Activated CD4-positive, alpha-beta memory T cell treated with anti-CD3 and anti-CD28 coated beads for 36 hours (primary cell): ENCODE measurements at regions of chr14 and their contacts with region 1.

Region 1: GRCh38 chr14:61620130-61620946 is 75.0 kb upstream of the HIF1A start:
- DNase-seq: peak; percentile 79
- H3K4me3 Mint-ChIP-seq: no peak overlapping the region
- H3K27ac Mint-ChIP-seq: peak overlapping the region; percentile 67
- H3K4me1 Mint-ChIP-seq: peaks cover 65% of the 10 kb centered on the region
- H3K27me3 Mint-ChIP-seq: no peaks in the 10 kb centered on the region

Region 2: GRCh38 chr14:61503167-61503801 is 117.1 kb before region 1 on chr14:
- CTCF ChIA-PET with region 1: interaction called, 3 read pairs
- POLR2A ChIA-PET with region 1: no interaction called
- intact Hi-C with region 1: loop called (anchors 1 kb)
- DNase-seq: peak; percentile 90
- H3K4me3 Mint-ChIP-seq: peak overlapping the region; percentile 62
- H3K27ac Mint-ChIP-seq: peak overlapping the region; percentile 98
- H3K4me1 Mint-ChIP-seq: peaks cover 98% of the 10 kb centered on the region
- H3K27me3 Mint-ChIP-seq: no peaks in the 10 kb centered on the region

Region 3: DNA sequence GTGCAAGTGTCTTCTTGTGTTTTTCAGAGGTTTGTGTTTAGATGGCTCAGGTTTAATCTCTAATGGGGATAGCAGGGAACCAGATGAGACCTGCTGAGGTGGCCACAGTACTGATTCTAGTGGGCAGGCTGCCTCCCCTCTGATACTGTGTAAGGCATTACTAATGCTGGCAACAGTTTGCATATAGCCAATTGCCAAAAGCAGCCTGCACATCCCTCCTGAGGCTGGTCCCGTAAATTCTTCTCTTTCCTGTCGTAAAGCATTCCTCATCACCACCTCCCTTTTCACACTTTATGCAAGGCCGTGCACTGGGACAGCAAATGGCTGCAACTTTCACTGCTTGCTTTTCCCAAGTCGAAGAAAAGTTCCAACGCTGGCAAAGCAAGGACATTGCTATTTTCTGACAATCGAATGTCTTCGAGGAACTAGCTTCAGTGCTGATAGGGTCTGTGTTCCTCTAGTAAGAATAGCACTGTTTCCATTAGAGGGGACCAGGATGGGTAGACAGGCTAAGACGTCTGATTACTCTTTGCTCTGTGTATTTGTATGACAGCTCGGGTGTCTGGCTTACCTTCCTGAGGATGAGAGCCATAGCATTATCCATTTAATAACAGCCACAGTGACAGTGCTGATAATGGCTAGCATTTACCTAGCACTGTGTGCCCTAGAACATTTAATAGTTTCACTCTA is 103.2 kb before region 1 on chr14:
- CTCF ChIA-PET with region 1: no interaction called
- POLR2A ChIA-PET with region 1: no interaction called
- intact Hi-C with region 1: no loop called
- DNase-seq: no peak
- H3K4me3 Mint-ChIP-seq: no peak overlapping the region
- H3K27ac Mint-ChIP-seq: peak overlapping the region; percentile 90
- H3K4me1 Mint-ChIP-seq: peaks cover 90% of the 10 kb centered on the region
- H3K27me3 Mint-ChIP-seq: no peaks in the 10 kb centered on the region

Region 4: GRCh38 chr14:61561657-61562276 is 58.6 kb before region 1 on chr14:
- CTCF ChIA-PET with region 1: interaction called, 3 read pairs
- POLR2A ChIA-PET with region 1: interaction called, 7 read pairs
- intact Hi-C with region 1: loop called (anchors 2 kb)
- DNase-seq: no peak
- H3K4me3 Mint-ChIP-seq: no peak overlapping the region
- H3K27ac Mint-ChIP-seq: peak overlapping the region; percentile 83
- H3K4me1 Mint-ChIP-seq: peaks cover 66% of the 10 kb centered on the region
- H3K27me3 Mint-ChIP-seq: no peaks in the 10 kb centered on the region

Region 5: GRCh38 chr14:61585598-61586543 is 34.5 kb before region 1 on chr14:
- CTCF ChIA-PET with region 1: no interaction called
- POLR2A ChIA-PET with region 1: no interaction called
- intact Hi-C with region 1: loop called (anchors 5 kb)
- DNase-seq: no peak
- H3K4me3 Mint-ChIP-seq: no peak overlapping the region
- H3K27ac Mint-ChIP-seq: no peak overlapping the region
- H3K4me1 Mint-ChIP-seq: peaks cover 9% of the 10 kb centered on the region
- H3K27me3 Mint-ChIP-seq: no peaks in the 10 kb centered on the region

Region 6: GRCh38 chr14:61671082-61671481 is 50.7 kb after region 1 on chr14:
- CTCF ChIA-PET with region 1: no interaction called
- POLR2A ChIA-PET with region 1: interaction called, 7 read pairs
- intact Hi-C with region 1: loop called (anchors 1 kb)
- DNase-seq: peak; percentile 65
- H3K4me3 Mint-ChIP-seq: no peak overlapping the region
- H3K27ac Mint-ChIP-seq: no peak overlapping the region
- H3K4me1 Mint-ChIP-seq: peaks cover 15% of the 10 kb centered on the region
- H3K27me3 Mint-ChIP-seq: no peaks in the 10 kb centered on the region

Region 7: GRCh38 chr14:61694830-61695694 is 74.7 kb after region 1 on chr14 and contains the start of gene HIF1A:
- CTCF ChIA-PET with region 1: interaction called, 3 read pairs
- POLR2A ChIA-PET with region 1: interaction called, 5 read pairs
- intact Hi-C with region 1: loop called (anchors 2 kb)
- DNase-seq: peak; percentile 99
- H3K4me3 Mint-ChIP-seq: peak within 1 kb of the TSS; percentile 98
- H3K27ac Mint-ChIP-seq: peak within 1 kb of the TSS; percentile 98
- H3K4me1 Mint-ChIP-seq: peaks cover 49% of the 10 kb centered on the region
- H3K27me3 Mint-ChIP-seq: no peaks in the 10 kb centered on the region
- total RNA-seq, gene HIF1A: 283 to 287 TPM